Breast epithelium (tissue), 4 donors: ENCODE measurements at regions of chr14 and their contacts with region 1.

Region 1: DNA sequence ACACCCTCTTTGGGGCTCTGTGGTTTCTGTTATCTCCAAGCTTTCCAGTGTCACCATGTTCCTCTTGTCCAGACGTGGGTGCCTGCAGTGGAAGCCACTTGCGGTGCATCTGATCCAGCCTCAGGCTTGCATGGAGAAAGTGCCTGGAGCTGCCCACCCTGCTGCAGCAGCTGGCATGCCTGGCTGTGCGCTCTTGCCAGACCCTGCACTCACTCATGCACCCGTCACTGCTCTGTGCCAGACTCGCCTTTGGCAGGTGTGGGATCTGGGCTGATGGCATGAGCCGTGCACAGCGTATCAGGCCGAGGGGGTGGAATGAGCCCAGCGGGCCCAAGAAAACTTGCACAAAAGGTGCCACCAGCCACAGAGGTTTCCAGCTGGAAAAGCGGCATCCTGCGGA is 105.1 kb downstream of the MNAT1 start:
- DNase-seq: no peak
- H3K4me3 ChIP-seq: no peak overlapping the region
- H3K27ac ChIP-seq: no peak overlapping the region
- H3K4me1 ChIP-seq: no peaks in the 10 kb centered on the region
- H3K27me3 ChIP-seq: no peaks in the 10 kb centered on the region
- CTCF ChIP-seq: no peak
- POLR2A ChIP-seq: no peak

Region 2: GRCh38 chr14:60396718-60397343 is 442.8 kb before region 1 on chr14:
- intact Hi-C with region 1: no loop called
- DNase-seq: no peak
- H3K4me3 ChIP-seq: no peak overlapping the region
- H3K27ac ChIP-seq: no peak overlapping the region
- H3K4me1 ChIP-seq: no peaks in the 10 kb centered on the region
- H3K27me3 ChIP-seq: no peaks in the 10 kb centered on the region
- CTCF ChIP-seq: no peak
- POLR2A ChIP-seq: no peak

Region 3: GRCh38 chr14:60565211-60565610 is 274.4 kb before region 1 on chr14:
- intact Hi-C with region 1: loop called (anchors 5 kb)
- DNase-seq: peak in 1 of 2 donors; percentile 38
- H3K4me3 ChIP-seq: no peak overlapping the region
- H3K27ac ChIP-seq: peak overlapping the region in 1 of 2 donors; percentile 38
- H3K4me1 ChIP-seq: no peaks in the 10 kb centered on the region
- H3K27me3 ChIP-seq: no peaks in the 10 kb centered on the region
- CTCF ChIP-seq: no peak
- POLR2A ChIP-seq: no peak

Region 4: DNA sequence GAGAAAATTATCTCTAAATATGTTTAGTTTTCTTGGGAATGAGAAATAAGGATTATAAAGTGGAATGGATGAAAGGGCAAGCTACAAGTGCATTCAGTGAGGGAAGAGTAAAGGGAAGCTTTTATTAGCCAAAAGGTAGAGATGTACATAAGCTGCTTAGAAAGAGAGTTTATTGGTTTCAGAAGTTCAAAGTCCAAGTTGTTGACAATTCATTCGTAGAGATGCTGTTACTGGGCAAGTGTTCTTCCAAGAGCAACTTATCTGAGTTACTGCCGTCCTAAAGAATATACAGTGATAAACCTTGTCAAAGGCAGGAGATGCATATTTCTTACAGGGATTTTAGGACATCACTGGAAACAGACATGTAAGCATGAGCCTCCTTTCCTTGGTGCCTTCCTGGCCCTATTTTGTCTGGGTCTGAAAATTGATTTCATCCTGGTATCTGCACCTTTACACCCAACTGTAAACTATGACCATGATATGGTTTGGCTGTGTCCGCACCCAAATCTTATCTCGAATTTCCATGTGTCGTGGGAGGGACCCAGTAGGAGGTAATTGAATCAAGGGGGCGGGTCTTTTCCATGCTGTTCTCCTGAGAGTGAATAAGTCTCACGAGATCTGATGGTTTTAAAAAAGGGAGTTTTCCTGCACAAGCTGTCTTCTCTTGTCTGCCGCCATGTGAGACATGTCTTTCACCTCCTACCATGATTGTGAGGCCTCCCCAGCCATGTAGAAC is 94.4 kb after region 1 on chr14:
- intact Hi-C with region 1: no loop called
- DNase-seq: no peak
- H3K4me3 ChIP-seq: no peak overlapping the region
- H3K27ac ChIP-seq: no peak overlapping the region
- H3K4me1 ChIP-seq: no peaks in the 10 kb centered on the region
- H3K27me3 ChIP-seq: no peaks in the 10 kb centered on the region
- CTCF ChIP-seq: no peak
- POLR2A ChIP-seq: no peak

Region 5: GRCh38 chr14:60964904-60965303 is 125.2 kb after region 1 on chr14:
- intact Hi-C with region 1: loop called (anchors 5 kb)
- DNase-seq: no peak
- H3K4me3 ChIP-seq: no peak overlapping the region
- H3K27ac ChIP-seq: no peak overlapping the region
- H3K4me1 ChIP-seq: no peaks in the 10 kb centered on the region
- H3K27me3 ChIP-seq: no peaks in the 10 kb centered on the region
- CTCF ChIP-seq: no peak
- POLR2A ChIP-seq: no peak